ENCODE measurements at regions of chr9 and their contacts with region 1.

Region 1: GRCh38 chr9:14441976-14442651 is 128.2 kb upstream of the NFIB start:
- DNase-seq: peak; percentile 5
- ATAC-seq: peak; percentile 42; the same call in 1 of the 2 replicates
- H3K4me3 ChIP-seq: no peak overlapping the region
- H3K27ac ChIP-seq: no peak overlapping the region
- H3K4me1 ChIP-seq: peaks cover 7% of the 10 kb centered on the region; the same call in 1 of the 2 replicates
- H3K27me3 ChIP-seq: peaks cover 13% of the 10 kb centered on the region
- CTCF ChIP-seq: peak; percentile 26; the same call in 1 of the 2 replicates
- POLR2A ChIP-seq: no peak
- RAD21 ChIP-seq: peak; percentile 20; the same call in 1 of the 2 replicates

Region 2: GRCh38 chr9:14383294-14383693 is 58.8 kb before region 1 on chr9:
- CTCF ChIA-PET with region 1: no interaction called
- POLR2A ChIA-PET with region 1: no interaction called
- dilution Hi-C with region 1: no loop called
- in situ Hi-C with region 1: no loop called
- intact Hi-C with region 1: no loop called
- DNase-seq: no peak
- ATAC-seq: no peak
- H3K4me3 ChIP-seq: no peak overlapping the region
- H3K27ac ChIP-seq: no peak overlapping the region
- H3K4me1 ChIP-seq: no peaks in the 10 kb centered on the region
- H3K27me3 ChIP-seq: peaks cover 31% of the 10 kb centered on the region
- CTCF ChIP-seq: no peak
- POLR2A ChIP-seq: no peak
- RAD21 ChIP-seq: no peak

Region 3: GRCh38 chr9:14415947-14416346 is 26.2 kb before region 1 on chr9:
- CTCF ChIA-PET with region 1: no interaction called
- POLR2A ChIA-PET with region 1: no interaction called
- dilution Hi-C with region 1: no loop called
- in situ Hi-C with region 1: no loop called
- intact Hi-C with region 1: no loop called
- DNase-seq: peak; percentile 92
- ATAC-seq: peak; percentile 96
- H3K4me3 ChIP-seq: no peak overlapping the region
- H3K27ac ChIP-seq: no peak overlapping the region
- H3K4me1 ChIP-seq: peaks cover 4% of the 10 kb centered on the region
- H3K27me3 ChIP-seq: peaks cover 58% of the 10 kb centered on the region
- CTCF ChIP-seq: no peak
- POLR2A ChIP-seq: no peak
- RAD21 ChIP-seq: no peak

Region 4: DNA sequence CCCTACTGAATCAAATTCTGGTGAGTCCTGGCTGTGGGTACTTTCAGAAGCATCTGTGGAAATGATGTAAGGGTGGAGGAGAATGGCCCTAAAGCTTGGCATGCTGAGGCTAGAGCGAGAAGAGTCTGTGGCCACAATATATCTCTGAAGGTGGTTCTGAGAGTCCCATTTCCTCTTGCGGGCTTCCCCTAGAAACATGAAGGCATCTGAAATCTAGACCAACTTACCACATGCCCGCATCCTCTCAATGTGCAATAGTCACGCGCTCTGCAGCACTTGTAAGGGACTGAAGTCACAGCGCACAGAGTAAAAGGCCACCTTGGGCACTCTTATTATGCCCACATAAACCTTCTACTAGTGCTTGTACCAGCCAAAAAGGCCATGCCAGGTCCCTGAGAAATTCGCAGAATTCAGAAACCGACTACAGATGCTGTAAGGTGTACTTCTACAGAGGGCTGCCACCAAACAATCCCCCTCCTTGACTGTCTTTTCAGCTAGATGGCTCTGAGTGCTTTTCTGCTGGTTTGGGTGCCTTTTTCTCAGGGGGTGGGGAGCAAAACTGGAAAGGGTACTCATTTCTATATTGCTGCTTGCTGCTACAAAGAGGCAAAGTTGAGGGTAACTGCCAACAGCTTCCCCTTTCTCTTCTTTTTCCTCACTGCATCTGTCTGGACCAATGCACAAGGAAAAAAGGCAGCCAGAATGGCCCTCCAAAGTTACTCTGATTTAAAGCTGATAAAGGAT is 143.8 kb after region 1 on chr9:
- CTCF ChIA-PET with region 1: no interaction called
- POLR2A ChIA-PET with region 1: no interaction called
- dilution Hi-C with region 1: no loop called
- in situ Hi-C with region 1: no loop called
- intact Hi-C with region 1: no loop called
- DNase-seq: no peak
- ATAC-seq: no peak
- H3K4me3 ChIP-seq: no peak overlapping the region
- H3K27ac ChIP-seq: no peak overlapping the region
- H3K4me1 ChIP-seq: no peaks in the 10 kb centered on the region
- H3K27me3 ChIP-seq: no peaks in the 10 kb centered on the region
- CTCF ChIP-seq: no peak
- POLR2A ChIP-seq: no peak
- RAD21 ChIP-seq: no peak

Region 5: GRCh38 chr9:14768405-14769229 is 326.5 kb after region 1 on chr9:
- CTCF ChIA-PET with region 1: no interaction called
- POLR2A ChIA-PET with region 1: no interaction called
- dilution Hi-C with region 1: no loop called
- in situ Hi-C with region 1: no loop called
- intact Hi-C with region 1: loop called (anchors 5 kb)
- DNase-seq: peak; percentile 51
- ATAC-seq: peak; percentile 75
- H3K4me3 ChIP-seq: no peak overlapping the region
- H3K27ac ChIP-seq: no peak overlapping the region
- H3K4me1 ChIP-seq: no peaks in the 10 kb centered on the region
- H3K27me3 ChIP-seq: no peaks in the 10 kb centered on the region
- CTCF ChIP-seq: peak; percentile 72
- POLR2A ChIP-seq: no peak
- RAD21 ChIP-seq: peak; percentile 73